ENCODE measurements at regions of chr7 and their contacts with region 1.

Region 1: DNA sequence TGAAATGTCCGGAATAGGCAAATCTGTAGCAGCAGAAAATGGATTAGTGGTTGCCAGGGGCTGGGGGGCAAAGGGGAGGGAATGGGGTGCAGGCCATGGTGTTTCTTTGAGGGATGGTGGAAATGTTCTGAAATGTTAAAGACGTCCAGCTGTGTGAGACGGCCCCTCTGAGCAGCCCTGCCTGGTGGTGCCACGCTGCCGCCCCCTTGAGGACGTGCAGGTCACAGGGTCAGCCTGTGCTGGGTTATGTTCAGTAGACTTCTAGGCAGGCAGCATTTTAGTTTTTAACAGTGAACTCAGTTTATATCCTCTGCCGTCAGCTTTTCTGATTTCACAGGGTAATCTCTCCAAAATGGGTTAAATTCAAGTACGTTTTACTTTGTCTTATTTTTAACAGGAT is 9.4 kb downstream of the NUB1 start:
- DNase-seq: peak; percentile 70
- H3K4me3 Mint-ChIP-seq: peak overlapping the region; percentile 17
- H3K27ac Mint-ChIP-seq: peak overlapping the region; percentile 91
- H3K4me1 Mint-ChIP-seq: peaks cover 51% of the 10 kb centered on the region
- H3K27me3 Mint-ChIP-seq: no peaks in the 10 kb centered on the region

Region 2: DNA sequence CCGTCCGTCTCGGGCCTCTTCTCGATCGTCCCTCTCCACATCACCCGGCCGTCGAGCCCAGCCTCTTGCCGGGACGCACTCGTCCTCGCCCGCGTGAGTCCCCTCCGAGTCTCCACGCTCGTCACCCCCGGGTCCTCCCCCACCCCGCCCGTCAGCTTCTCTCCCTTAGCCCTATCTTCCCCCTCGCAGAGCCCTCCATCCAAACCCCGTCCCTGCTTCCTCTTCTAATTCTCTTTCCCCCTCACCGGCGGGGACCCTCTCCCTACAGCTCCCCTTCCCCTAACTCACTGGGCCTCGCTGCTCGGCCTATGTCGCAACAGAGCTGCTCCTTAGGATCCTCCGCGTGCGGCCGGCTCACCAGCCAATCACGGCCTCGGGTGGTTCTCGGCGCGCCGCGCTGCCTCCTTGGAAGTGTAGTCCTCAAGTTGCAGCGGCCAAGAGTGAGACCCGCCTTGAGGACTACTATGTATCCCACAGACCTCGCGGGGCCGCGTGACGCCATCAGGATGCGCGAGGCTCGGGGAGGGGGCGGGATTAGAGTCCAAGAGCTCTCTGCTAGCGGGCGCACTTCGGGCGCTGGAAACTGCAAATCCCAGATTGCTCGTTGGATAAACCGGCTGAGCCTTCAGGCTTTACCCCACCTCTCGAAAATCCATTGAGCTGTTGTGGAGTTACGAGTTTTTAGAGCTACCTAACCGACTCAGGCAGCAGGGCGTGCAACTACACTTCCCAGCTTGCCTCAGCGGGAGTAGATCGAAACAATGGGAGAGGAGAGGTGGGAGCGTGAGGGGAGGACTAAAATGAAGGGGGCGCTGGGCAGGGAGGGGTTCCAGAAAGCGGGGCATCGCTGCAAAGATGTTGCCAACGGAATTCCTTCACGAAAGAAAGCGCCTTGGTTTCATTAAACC is 123.9 kb before region 1 on chr7 and contains the start of gene ABCF2:
- CTCF ChIA-PET with region 1: interaction called, 3 read pairs
- intact Hi-C with region 1: loop called (anchors 1 kb)
- DNase-seq: peak; percentile 100
- H3K4me3 Mint-ChIP-seq: peak within 1 kb of the TSS; percentile 99
- H3K27ac Mint-ChIP-seq: peak within 1 kb of the TSS; percentile 81
- H3K4me1 Mint-ChIP-seq: peaks cover 43% of the 10 kb centered on the region
- H3K27me3 Mint-ChIP-seq: no peaks in the 10 kb centered on the region
- total RNA-seq, gene ABCF2: 33.9 to 35.5 TPM

Region 3: GRCh38 chr7:151304856-151305255 is 46.2 kb before region 1 on chr7:
- CTCF ChIA-PET with region 1: interaction called, 49 read pairs
- intact Hi-C with region 1: loop called (anchors 1 kb)
- DNase-seq: no peak
- H3K4me3 Mint-ChIP-seq: peak overlapping the region; percentile 36
- H3K27ac Mint-ChIP-seq: no peak overlapping the region
- H3K4me1 Mint-ChIP-seq: peaks cover 5% of the 10 kb centered on the region
- H3K27me3 Mint-ChIP-seq: peaks cover 14% of the 10 kb centered on the region

Region 4: DNA sequence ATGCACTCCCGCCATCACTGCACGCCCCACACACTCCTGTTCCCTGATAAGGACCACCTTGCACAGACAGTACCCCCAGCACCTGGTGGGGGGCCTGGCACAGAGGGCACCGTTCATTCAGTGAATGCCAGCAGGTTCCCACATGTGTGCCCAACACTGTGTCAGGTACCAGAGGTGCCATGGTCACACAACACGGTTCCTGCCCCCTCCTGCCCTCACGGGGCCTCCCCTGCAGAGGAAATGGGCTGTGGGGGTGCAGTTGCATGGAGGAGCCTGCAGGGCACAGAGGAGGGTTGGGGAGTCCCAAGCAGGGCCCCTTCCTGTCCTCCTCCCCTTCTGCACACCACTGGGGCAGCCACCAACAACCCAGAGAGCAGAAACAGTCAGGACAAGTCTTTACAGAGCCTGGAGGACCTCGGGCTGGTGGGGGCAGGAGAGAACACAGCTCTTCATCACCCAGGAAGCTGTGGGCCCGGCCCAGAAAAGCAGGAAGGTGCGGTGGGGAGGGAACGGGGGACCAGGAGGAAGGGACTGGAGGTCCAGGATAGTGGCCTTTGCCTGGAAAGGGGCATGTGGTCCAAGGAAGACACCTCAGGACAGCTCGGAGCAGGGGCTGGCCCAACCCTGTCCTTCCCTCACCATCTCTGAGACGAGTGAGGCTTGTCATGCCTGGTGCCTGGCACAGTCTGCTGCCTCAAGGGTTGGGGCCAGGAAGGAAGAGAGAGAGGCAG is 81.9 kb after region 1 on chr7:
- CTCF ChIA-PET with region 1: no interaction called
- intact Hi-C with region 1: loop called (anchors 1 kb)
- DNase-seq: peak; percentile 91
- H3K4me3 Mint-ChIP-seq: peak overlapping the region; percentile 46
- H3K27ac Mint-ChIP-seq: peak overlapping the region; percentile 87
- H3K4me1 Mint-ChIP-seq: peaks cover 47% of the 10 kb centered on the region
- H3K27me3 Mint-ChIP-seq: no peaks in the 10 kb centered on the region

Region 5: GRCh38 chr7:151769188-151769841 is 418.3 kb after region 1 on chr7:
- CTCF ChIA-PET with region 1: no interaction called
- intact Hi-C with region 1: loop called (anchors 5 kb)
- DNase-seq: peak; percentile 62
- H3K4me3 Mint-ChIP-seq: peak overlapping the region; percentile 10
- H3K27ac Mint-ChIP-seq: peak overlapping the region; percentile 86
- H3K4me1 Mint-ChIP-seq: peaks cover 51% of the 10 kb centered on the region
- H3K27me3 Mint-ChIP-seq: no peaks in the 10 kb centered on the region

Region 6: GRCh38 chr7:152463709-152464311 is 1112.8 kb after region 1 on chr7:
- CTCF ChIA-PET with region 1: no interaction called
- intact Hi-C with region 1: loop called (anchors 5 kb)
- DNase-seq: peak; percentile 100
- H3K4me3 Mint-ChIP-seq: peak overlapping the region; percentile 89
- H3K27ac Mint-ChIP-seq: no peak overlapping the region
- H3K4me1 Mint-ChIP-seq: peaks cover 8% of the 10 kb centered on the region
- H3K27me3 Mint-ChIP-seq: no peaks in the 10 kb centered on the region

Measured in activated naive CD4-positive, alpha-beta T cell treated with anti-CD3 and anti-CD28 coated beads for 36 hours (primary cell).